ENCODE measurements at regions of chr5 and their contacts with region 1.

Region 1: GRCh38 chr5:55037046-55037771 is 13.2 kb downstream of the GZMK start:
- DNase-seq: peak; percentile 47 to 80
- ATAC-seq: peak; percentile 91 to 95 (median 92)
- H3K4me3 ChIP-seq: no peak overlapping the region
- H3K4me3 Mint-ChIP-seq: peak overlapping the region; percentile 79
- H3K27ac ChIP-seq: peak overlapping the region; percentile 94
- H3K27ac Mint-ChIP-seq: peak overlapping the region; percentile 95 to 97
- H3K4me1 ChIP-seq: peaks cover 14% of the 10 kb centered on the region
- H3K4me1 Mint-ChIP-seq: peaks cover 28 to 29% of the 10 kb centered on the region in 2 donors
- H3K27me3 ChIP-seq: no peaks in the 10 kb centered on the region
- H3K27me3 Mint-ChIP-seq: no peaks in the 10 kb centered on the region
- CTCF ChIP-seq: no peak

Region 2: DNA sequence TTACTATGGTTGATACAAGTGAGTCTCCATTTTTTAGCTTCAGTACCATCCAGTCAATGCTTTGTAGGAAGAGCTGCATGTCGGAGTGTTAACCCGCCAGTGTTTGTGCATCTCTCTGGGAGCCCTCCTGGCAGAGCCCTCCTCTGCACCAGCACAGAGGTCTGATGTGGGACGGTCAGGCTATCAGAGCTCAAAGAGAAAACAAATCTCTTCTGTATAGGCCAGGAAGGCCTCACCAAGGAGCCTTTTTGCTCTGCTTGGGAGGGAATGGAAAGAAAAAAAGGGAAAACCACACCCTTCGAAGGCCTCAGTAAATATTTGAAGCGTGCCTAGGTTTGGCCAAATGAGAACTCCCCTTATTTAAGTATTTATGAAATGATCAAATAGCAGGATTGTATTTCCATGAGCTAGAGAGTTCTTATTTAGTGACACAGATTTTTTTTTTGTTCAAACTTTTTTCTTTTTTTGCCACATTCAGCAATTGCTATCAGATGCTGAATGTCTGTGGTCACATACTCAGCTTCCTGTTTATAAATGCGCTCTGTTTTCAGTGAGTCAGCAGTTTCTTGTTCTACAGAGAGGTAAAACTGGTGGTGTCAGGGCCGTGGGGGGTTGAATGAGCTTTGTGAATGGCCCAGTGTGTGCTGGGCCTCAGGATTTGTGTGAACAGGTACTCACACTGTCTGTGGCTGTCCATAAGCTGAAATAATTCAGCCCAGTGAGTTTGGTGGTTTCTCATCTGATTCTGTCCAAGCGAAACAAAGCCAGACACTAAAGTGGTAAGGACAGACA is 293.0 kb before region 1 on chr5:
- intact Hi-C with region 1: loop called (anchors 5 kb)
- DNase-seq: peak; percentile 41 to 76
- ATAC-seq: peak; percentile 92 to 97 (median 96)
- H3K4me3 ChIP-seq: no peak overlapping the region
- H3K4me3 Mint-ChIP-seq: peak overlapping the region; percentile 47
- H3K27ac ChIP-seq: peak overlapping the region; percentile 48
- H3K27ac Mint-ChIP-seq: peak overlapping the region; percentile 73 to 84
- H3K4me1 ChIP-seq: peaks cover 25% of the 10 kb centered on the region
- H3K4me1 Mint-ChIP-seq: peaks cover 32 to 52% of the 10 kb centered on the region in 2 donors
- H3K27me3 ChIP-seq: no peaks in the 10 kb centered on the region
- H3K27me3 Mint-ChIP-seq: peaks cover 0 to 4% of the 10 kb centered on the region in 2 donors
- CTCF ChIP-seq: no peak

Region 3: GRCh38 chr5:54990841-54991258 is 46.4 kb before region 1 on chr5:
- intact Hi-C with region 1: loop called (anchors 2 kb)
- DNase-seq: no peak
- ATAC-seq: no peak
- H3K4me3 ChIP-seq: no peak overlapping the region
- H3K4me3 Mint-ChIP-seq: no peak overlapping the region
- H3K27ac ChIP-seq: no peak overlapping the region
- H3K27ac Mint-ChIP-seq: peak overlapping the region in 1 of 2 donors; percentile 9
- H3K4me1 ChIP-seq: peaks cover 37% of the 10 kb centered on the region
- H3K4me1 Mint-ChIP-seq: peaks cover 76 to 78% of the 10 kb centered on the region in 2 donors
- H3K27me3 ChIP-seq: no peaks in the 10 kb centered on the region
- H3K27me3 Mint-ChIP-seq: no peaks in the 10 kb centered on the region
- CTCF ChIP-seq: no peak

Region 4: DNA sequence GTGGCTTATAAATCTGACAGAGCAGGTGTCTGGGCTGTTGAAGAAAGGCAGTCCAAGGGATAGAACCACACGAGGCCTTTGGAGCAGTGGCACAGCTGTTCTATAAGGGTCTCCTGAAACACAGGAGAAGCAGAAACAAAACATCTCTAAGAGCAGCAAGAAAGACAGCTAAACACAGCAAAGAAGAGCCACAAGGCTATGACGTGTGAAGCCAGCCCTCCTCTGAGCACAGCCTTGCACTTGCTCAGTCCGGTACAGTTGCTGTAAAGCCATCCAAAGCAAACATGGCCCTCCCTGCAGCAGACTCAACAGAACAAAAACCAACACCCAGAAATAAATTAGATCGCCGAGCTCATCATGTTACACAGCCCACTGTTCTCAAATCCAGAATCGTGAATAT is 15.8 kb before region 1 on chr5:
- intact Hi-C with region 1: loop called (anchors 1 kb)
- DNase-seq: peak in 1 of 2 donors; percentile 49
- ATAC-seq: peak; percentile 19 to 46 (median 38)
- H3K4me3 ChIP-seq: no peak overlapping the region
- H3K4me3 Mint-ChIP-seq: peak overlapping the region; percentile 53
- H3K27ac ChIP-seq: no peak overlapping the region
- H3K27ac Mint-ChIP-seq: peak overlapping the region; percentile 77 to 83
- H3K4me1 ChIP-seq: peaks cover 22% of the 10 kb centered on the region
- H3K4me1 Mint-ChIP-seq: peaks cover 53 to 54% of the 10 kb centered on the region in 2 donors
- H3K27me3 ChIP-seq: no peaks in the 10 kb centered on the region
- H3K27me3 Mint-ChIP-seq: no peaks in the 10 kb centered on the region
- CTCF ChIP-seq: no peak

Region 5: DNA sequence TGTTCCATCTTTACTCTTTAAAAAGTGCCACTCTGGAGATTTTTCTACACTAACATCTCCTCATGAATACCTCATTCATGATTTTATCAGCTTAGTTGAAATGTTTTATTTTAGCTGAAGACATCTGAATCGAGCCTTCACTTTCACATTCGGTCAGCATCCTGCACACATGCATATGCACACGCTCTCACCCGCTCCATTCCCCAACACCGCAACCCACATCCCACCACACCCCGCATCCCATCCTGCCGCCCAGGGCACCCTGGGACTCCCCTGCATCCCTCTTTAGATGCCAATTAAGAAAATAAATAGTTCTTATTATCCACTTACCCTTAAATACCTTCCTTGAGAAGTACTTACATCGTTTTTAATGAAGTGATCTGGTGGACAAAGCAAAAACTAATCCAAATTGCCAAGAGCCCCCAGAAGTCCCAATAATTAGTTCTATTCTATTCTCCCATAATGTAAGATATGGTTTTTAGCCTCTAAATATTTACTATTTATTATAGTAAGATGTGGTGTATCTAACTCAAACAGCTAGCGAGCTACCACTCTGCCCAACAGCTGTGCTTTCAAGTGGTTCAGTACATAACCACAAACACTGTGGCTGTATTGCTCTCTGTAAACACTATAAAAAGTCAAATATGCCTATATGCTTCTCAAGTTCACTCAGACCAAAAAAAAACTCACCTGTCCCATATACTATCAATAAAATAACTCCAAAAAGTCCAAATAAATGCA is 25.0 kb after region 1 on chr5:
- intact Hi-C with region 1: loop called (anchors 1 kb)
- DNase-seq: peak; percentile 63 to 69
- ATAC-seq: peak; percentile 77 to 87 (median 85)
- H3K4me3 ChIP-seq: peak overlapping the region; percentile 38
- H3K4me3 Mint-ChIP-seq: peak overlapping the region; percentile 90
- H3K27ac ChIP-seq: peak overlapping the region; percentile 83
- H3K27ac Mint-ChIP-seq: peak overlapping the region; percentile 95 to 96
- H3K4me1 ChIP-seq: peaks cover 26% of the 10 kb centered on the region
- H3K4me1 Mint-ChIP-seq: peaks cover 72 to 86% of the 10 kb centered on the region in 2 donors
- H3K27me3 ChIP-seq: no peaks in the 10 kb centered on the region
- H3K27me3 Mint-ChIP-seq: no peaks in the 10 kb centered on the region
- CTCF ChIP-seq: no peak

Region 6: GRCh38 chr5:55072666-55073065 is 35.5 kb after region 1 on chr5:
- intact Hi-C with region 1: loop called (anchors 2 kb)
- DNase-seq: peak in 1 of 2 donors; percentile 65
- ATAC-seq: peak; percentile 81 to 92 (median 90)
- H3K4me3 ChIP-seq: no peak overlapping the region
- H3K4me3 Mint-ChIP-seq: peak overlapping the region; percentile 83
- H3K27ac ChIP-seq: peak overlapping the region; percentile 72
- H3K27ac Mint-ChIP-seq: peak overlapping the region; percentile 79 to 98
- H3K4me1 ChIP-seq: peaks cover 31% of the 10 kb centered on the region
- H3K4me1 Mint-ChIP-seq: peaks cover 47 to 48% of the 10 kb centered on the region in 2 donors
- H3K27me3 ChIP-seq: no peaks in the 10 kb centered on the region
- H3K27me3 Mint-ChIP-seq: no peaks in the 10 kb centered on the region
- CTCF ChIP-seq: no peak

Region 7: DNA sequence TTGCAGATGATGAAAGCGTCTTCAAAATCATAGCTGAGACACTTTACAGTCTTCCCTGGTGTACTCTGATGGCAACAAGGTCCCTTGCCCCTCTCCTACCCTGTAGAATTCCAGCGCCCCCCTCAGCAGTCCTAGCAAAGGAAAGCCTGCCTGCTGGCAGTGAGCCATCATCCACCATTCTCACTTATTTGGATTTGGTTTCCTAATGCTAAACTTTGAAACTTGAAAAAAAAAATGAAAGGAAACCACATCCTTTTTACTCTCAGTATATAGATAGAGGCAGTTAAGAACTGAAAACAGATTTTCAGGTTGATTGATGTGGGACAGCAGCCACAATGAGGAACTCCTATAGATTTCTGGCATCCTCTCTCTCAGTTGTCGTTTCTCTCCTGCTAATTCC is 65.1 kb after region 1 on chr5 and contains the start of gene GZMA:
- intact Hi-C with region 1: loop called (anchors 1 kb)
- DNase-seq: peak; percentile 33 to 79
- ATAC-seq: peak; percentile 37 to 56 (median 54)
- H3K4me3 ChIP-seq: peak within 1 kb of the TSS; percentile 71
- H3K4me3 Mint-ChIP-seq: peak within 1 kb of the TSS; percentile 94
- H3K27ac ChIP-seq: peak within 1 kb of the TSS; percentile 87
- H3K27ac Mint-ChIP-seq: peak within 1 kb of the TSS; percentile 92 to 96
- H3K4me1 ChIP-seq: peaks cover 15% of the 10 kb centered on the region
- H3K4me1 Mint-ChIP-seq: peaks cover 79 to 85% of the 10 kb centered on the region in 2 donors
- H3K27me3 ChIP-seq: no peaks in the 10 kb centered on the region
- H3K27me3 Mint-ChIP-seq: no peaks in the 10 kb centered on the region
- CTCF ChIP-seq: no peak
- total RNA-seq, gene GZMA: 530 to 621 (median 590) TPM